HEK293 (cell line): ENCODE measurements at regions of chr21 and their contacts with region 1.

Region 1: GRCh38 chr21:26732432-26733221 is 112.6 kb downstream of the ADAMTS1 start:
- H3K4me3 ChIP-seq: no peak overlapping the region
- H3K27ac ChIP-seq: no peak overlapping the region
- H3K4me1 ChIP-seq: no peaks in the 10 kb centered on the region
- CTCF ChIP-seq: peak; percentile 30; the same call in 1 of the 2 replicates

Region 2: GRCh38 chr21:26715878-26716506 is 16.6 kb before region 1 on chr21:
- CTCF ChIA-PET with region 1: interaction called, 11 read pairs
- POLR2A ChIA-PET with region 1: no interaction called
- H3K4me3 ChIP-seq: no peak overlapping the region
- H3K27ac ChIP-seq: no peak overlapping the region
- H3K4me1 ChIP-seq: no peaks in the 10 kb centered on the region
- CTCF ChIP-seq: peak; percentile 63; the same call in 1 of the 2 replicates

Region 3: GRCh38 chr21:26756491-26757159 is 24.0 kb after region 1 on chr21:
- CTCF ChIA-PET with region 1: interaction called, 13 read pairs
- POLR2A ChIA-PET with region 1: no interaction called
- H3K4me3 ChIP-seq: no peak overlapping the region
- H3K27ac ChIP-seq: no peak overlapping the region
- H3K4me1 ChIP-seq: no peaks in the 10 kb centered on the region
- CTCF ChIP-seq: no peak